GM10248 (cell line): ENCODE measurements at regions of chr2 and their contacts with region 1.

Region 1: GRCh38 chr2:217785544-217786045 is 217.2 kb downstream of the TNS1 start:
- DNase-seq: peak; percentile 84
- CTCF ChIP-seq: peak; percentile 96

Region 2: GRCh38 chr2:217521820-217522219 is 263.8 kb before region 1 on chr2:
- CTCF ChIA-PET with region 1: no interaction called
- POLR2A ChIA-PET with region 1: no interaction called
- DNase-seq: no peak
- CTCF ChIP-seq: no peak

Region 3: GRCh38 chr2:217610401-217611075 is 175.1 kb before region 1 on chr2:
- CTCF ChIA-PET with region 1: no interaction called
- POLR2A ChIA-PET with region 1: no interaction called
- DNase-seq: peak; percentile 35
- CTCF ChIP-seq: no peak

Region 4: GRCh38 chr2:217662984-217663602 is 122.5 kb before region 1 on chr2:
- CTCF ChIA-PET with region 1: no interaction called
- POLR2A ChIA-PET with region 1: no interaction called
- DNase-seq: no peak
- CTCF ChIP-seq: no peak

Region 5: GRCh38 chr2:217804786-217805667 is 19.4 kb after region 1 on chr2:
- CTCF ChIA-PET with region 1: interaction called, 76 read pairs
- POLR2A ChIA-PET with region 1: no interaction called
- DNase-seq: no peak
- CTCF ChIP-seq: no peak

Region 6: DNA sequence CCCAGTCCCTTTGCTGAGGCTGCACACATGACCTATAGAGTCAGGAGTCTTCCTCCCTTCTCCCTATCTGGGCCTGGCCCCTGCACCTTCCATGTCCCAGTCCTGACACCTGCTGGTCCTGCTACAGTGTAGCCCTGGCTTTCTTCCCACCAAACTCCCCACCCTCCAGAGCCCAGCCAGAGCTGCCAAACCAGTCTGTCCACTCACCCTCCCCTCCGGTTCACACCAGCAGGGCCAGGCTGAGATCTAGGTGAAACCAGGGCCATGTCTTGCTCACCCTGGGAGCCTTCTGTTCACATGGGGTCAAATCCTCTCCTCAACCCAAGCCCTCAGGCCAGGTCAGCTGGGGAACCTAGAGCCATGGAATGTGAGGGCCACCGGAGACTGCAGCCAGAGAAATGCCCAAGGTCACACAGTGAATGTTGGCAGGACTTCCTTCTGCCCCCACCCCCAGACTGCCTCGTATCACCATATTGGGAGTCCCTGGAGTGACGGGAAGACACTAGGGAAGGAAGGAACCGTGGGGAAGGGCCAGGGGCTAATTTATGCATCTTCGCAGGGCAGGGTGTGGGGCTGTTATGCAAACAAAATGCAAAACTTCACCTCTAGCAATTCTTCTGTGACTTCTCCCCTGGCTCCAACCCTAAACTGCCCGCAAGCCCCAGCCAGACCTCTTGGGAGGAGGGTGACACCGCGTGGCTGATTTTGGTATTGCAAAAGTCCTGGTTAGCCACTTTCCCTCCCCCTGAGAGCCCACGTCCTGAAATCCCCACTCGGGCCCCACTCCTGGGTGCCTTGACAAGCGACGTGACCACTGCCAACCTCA is 202.6 kb after region 1 on chr2:
- CTCF ChIA-PET with region 1: interaction called, 132 read pairs
- POLR2A ChIA-PET with region 1: no interaction called
- DNase-seq: peak; percentile 83
- CTCF ChIP-seq: peak; percentile 84

Region 7: DNA sequence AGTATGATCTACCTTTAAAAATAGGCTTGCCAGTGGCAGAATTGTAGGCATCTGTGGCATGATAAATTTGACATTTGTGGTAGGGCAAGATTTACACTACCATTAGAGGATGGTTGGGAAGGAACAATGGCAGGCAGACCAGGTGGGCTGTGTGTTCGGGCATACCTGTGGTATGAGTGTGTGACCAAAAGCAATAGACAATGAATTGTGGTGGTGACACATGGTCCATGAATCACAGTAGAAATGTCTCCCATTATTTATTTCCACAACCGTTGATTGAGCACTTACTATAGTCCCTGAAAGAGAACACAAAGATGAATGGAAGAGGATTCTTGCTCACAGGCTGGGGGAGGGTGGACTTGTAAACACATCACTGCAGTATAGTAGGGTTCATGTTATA is 253.6 kb after region 1 on chr2:
- CTCF ChIA-PET with region 1: interaction called, 39 read pairs
- POLR2A ChIA-PET with region 1: no interaction called
- DNase-seq: no peak
- CTCF ChIP-seq: no peak

Region 8: DNA sequence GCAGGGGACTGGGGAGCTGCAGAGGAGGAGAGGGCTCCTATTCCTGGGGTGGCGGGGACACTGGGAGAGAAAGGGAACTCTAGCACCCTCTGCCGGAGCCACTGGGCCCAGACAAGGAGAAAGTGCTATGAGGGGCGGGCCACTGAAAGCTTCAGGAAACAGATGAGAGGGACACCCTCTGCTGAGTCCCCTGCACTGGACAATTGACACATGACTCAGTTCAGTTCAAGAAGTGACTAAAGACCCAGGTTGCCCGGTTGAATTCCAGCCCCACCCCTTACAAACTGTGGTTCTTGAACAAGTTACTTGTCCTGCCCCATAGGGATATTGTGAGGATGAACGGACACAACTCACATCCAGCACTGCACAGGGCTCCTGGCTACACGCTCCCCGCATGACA is 288.4 kb after region 1 on chr2:
- CTCF ChIA-PET with region 1: interaction called, 52 read pairs
- POLR2A ChIA-PET with region 1: no interaction called
- DNase-seq: peak; percentile 62
- CTCF ChIP-seq: peak; percentile 67